Breast epithelium (tissue), 4 donors: ENCODE measurements at regions of chr11 and their contacts with region 1.

Region 1: GRCh38 chr11:12361682-12362081 is 15.7 kb upstream of the PARVA start:
- DNase-seq: no peak
- H3K4me3 ChIP-seq: no peak overlapping the region
- H3K27ac ChIP-seq: no peak overlapping the region
- H3K4me1 ChIP-seq: no peaks in the 10 kb centered on the region
- H3K27me3 ChIP-seq: no peaks in the 10 kb centered on the region
- CTCF ChIP-seq: no peak
- POLR2A ChIP-seq: no peak

Region 2: GRCh38 chr11:11691296-11692142 is 670.2 kb before region 1 on chr11:
- intact Hi-C with region 1: loop called (anchors 5 kb)
- DNase-seq: no peak
- H3K4me3 ChIP-seq: no peak overlapping the region
- H3K27ac ChIP-seq: no peak overlapping the region
- H3K4me1 ChIP-seq: no peaks in the 10 kb centered on the region
- H3K27me3 ChIP-seq: no peaks in the 10 kb centered on the region
- CTCF ChIP-seq: no peak
- POLR2A ChIP-seq: no peak

Region 3: GRCh38 chr11:12303421-12304149 is 58.1 kb before region 1 on chr11:
- intact Hi-C with region 1: no loop called
- DNase-seq: no peak
- H3K4me3 ChIP-seq: no peak overlapping the region
- H3K27ac ChIP-seq: no peak overlapping the region
- H3K4me1 ChIP-seq: no peaks in the 10 kb centered on the region
- H3K27me3 ChIP-seq: no peaks in the 10 kb centered on the region
- CTCF ChIP-seq: no peak
- POLR2A ChIP-seq: no peak

Region 4: GRCh38 chr11:12411806-12412727 is 50.4 kb after region 1 on chr11:
- intact Hi-C with region 1: no loop called
- DNase-seq: peak in 1 of 2 donors; percentile 73
- H3K4me3 ChIP-seq: no peak overlapping the region
- H3K27ac ChIP-seq: peak overlapping the region; percentile 86 to 87
- H3K4me1 ChIP-seq: peaks cover 0 to 21% of the 10 kb centered on the region in 2 donors
- H3K27me3 ChIP-seq: no peaks in the 10 kb centered on the region
- CTCF ChIP-seq: peak; percentile 56 to 74 (median 64)
- POLR2A ChIP-seq: no peak